ENCODE measurements at regions of chr17 and their contacts with region 1.

Region 1: GRCh38 chr17:75393523-75394331 is 11.8 kb downstream of the GRB2 start:
- DNase-seq: peak; percentile 97
- H3K4me3 ChIP-seq: peak overlapping the region; percentile 69
- H3K27ac ChIP-seq: peak overlapping the region; percentile 56
- H3K4me1 ChIP-seq: peaks cover 70% of the 10 kb centered on the region
- CTCF ChIP-seq: 0 out of 2 replicates have a peak, but pooled peaks have one; percentile 11

Region 2: DNA sequence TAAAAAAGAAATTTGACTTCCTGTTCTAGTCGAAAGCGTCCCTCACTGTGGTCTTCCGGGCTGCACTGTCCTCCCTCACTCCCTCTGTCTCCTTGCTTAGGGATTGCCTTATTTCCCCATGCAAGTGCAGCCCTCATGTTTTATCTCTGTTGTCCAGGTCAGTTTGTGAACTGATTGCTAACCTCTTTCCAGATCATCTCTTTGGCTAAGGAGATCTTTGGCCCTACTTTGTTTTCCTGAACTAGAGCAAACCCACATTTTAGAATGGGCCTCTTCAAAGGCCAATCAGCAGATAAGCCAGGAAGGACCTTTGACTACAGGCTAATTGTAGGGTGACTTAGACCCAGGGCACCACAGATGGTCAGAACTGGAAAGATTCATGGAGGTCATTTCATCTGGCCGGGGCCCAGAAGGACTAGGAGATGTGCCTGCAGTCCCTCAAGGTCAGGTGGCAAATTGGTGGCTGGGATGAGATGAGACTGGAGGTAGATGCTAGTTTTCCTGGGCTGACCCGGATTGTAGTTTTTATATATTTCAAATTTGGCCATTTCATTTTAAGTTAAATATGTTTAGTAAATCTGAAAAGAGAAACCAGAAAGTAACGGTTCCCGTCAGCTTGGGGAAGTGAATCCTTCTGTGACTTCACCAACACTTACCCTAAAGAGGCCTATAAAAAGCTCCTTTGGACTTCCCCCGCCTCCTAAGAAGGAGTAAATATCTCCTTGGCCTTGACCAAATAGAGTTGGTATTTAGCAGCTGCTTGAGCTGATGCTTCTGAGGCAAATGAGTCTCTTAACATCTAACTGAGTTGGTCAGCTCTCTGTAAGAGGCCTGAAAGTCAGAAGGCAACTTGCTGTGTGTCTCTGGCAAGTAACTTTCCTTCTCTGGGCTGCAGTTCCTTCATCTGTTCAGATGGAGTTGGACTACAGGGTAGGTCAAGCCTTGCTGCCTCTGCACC is 98.2 kb before region 1 on chr17:
- CTCF ChIA-PET with region 1: interaction called, 3 read pairs
- POLR2A ChIA-PET with region 1: interaction called, 10 read pairs
- intact Hi-C with region 1: no loop called
- DNase-seq: peak; percentile 94
- H3K4me3 ChIP-seq: peak overlapping the region; percentile 62
- H3K27ac ChIP-seq: peak overlapping the region; percentile 95
- H3K4me1 ChIP-seq: peaks cover 90% of the 10 kb centered on the region
- CTCF ChIP-seq: no peak

Region 3: GRCh38 chr17:75338335-75338734 is 55.4 kb before region 1 on chr17:
- CTCF ChIA-PET with region 1: interaction called, 5 read pairs
- POLR2A ChIA-PET with region 1: interaction called, 43 read pairs
- intact Hi-C with region 1: no loop called
- DNase-seq: no peak
- H3K4me3 ChIP-seq: peak overlapping the region; percentile 36
- H3K27ac ChIP-seq: peak overlapping the region; percentile 94
- H3K4me1 ChIP-seq: peaks cover 89% of the 10 kb centered on the region
- CTCF ChIP-seq: no peak

Region 4: DNA sequence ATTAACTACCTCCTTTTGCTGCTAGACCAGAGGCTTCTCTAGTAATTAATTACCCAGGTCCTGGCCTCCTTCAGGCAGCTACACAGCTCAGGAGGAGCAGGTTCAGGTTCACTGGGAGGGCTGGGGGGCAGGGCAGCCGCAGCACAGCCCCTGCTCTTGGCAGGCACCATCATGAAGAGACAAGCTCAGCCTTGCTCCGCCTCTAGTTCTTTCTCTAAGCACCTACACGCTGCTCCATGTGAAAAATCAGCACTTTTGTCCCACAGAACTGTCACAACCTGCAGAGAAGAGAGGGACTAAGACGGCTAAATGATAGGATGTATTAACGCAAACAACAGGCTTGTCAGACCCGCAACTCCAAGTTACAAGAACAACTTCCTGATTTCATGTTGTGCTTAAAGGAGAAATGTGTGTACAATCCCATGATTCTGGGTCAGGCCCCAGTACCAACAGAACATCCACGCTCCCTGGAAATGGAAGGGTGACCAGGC is 41.6 kb before region 1 on chr17:
- CTCF ChIA-PET with region 1: interaction called, 5 read pairs
- POLR2A ChIA-PET with region 1: interaction called, 23 read pairs
- intact Hi-C with region 1: no loop called
- DNase-seq: peak; percentile 68
- H3K4me3 ChIP-seq: peak overlapping the region; percentile 43
- H3K27ac ChIP-seq: peak overlapping the region; percentile 94
- H3K4me1 ChIP-seq: peaks cover 63% of the 10 kb centered on the region
- CTCF ChIP-seq: no peak

Region 5: GRCh38 chr17:75364078-75364477 is 29.6 kb before region 1 on chr17:
- CTCF ChIA-PET with region 1: no interaction called
- POLR2A ChIA-PET with region 1: interaction called, 16 read pairs
- intact Hi-C with region 1: no loop called
- DNase-seq: no peak
- H3K4me3 ChIP-seq: peak overlapping the region; percentile 44
- H3K27ac ChIP-seq: peak overlapping the region; percentile 64
- H3K4me1 ChIP-seq: peaks cover 97% of the 10 kb centered on the region
- CTCF ChIP-seq: no peak

Region 6: DNA sequence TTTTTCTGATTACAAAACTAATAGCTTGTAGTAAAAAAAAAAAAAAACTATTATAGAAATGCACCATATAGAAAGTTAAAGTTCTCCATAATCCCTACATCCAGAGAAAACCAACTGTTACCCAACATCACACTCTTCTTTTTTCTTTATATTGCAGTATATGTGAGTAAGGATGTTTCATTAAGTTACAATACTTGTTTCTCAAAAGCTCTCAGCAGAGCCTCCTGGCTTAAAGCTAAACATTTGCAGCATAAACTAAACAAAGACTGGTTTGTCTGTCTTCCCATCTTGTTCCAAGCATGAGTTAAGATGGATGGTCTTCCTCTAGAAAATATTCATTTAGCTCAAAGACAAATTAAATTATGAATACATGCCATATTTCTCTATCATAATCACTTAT is 13.4 kb before region 1 on chr17:
- CTCF ChIA-PET with region 1: interaction called, 3 read pairs
- POLR2A ChIA-PET with region 1: interaction called, 55 read pairs
- intact Hi-C with region 1: no loop called
- DNase-seq: no peak
- H3K4me3 ChIP-seq: no peak overlapping the region
- H3K27ac ChIP-seq: no peak overlapping the region
- H3K4me1 ChIP-seq: peaks cover 69% of the 10 kb centered on the region
- CTCF ChIP-seq: no peak

Region 7: GRCh38 chr17:75405365-75406221 is 11.9 kb after region 1 on chr17 and contains the start of gene GRB2:
- CTCF ChIA-PET with region 1: interaction called, 3 read pairs
- POLR2A ChIA-PET with region 1: interaction called, 13 read pairs
- intact Hi-C with region 1: no loop called
- DNase-seq: peak; percentile 100
- H3K4me3 ChIP-seq: peak within 1 kb of the TSS; percentile 84
- H3K27ac ChIP-seq: peak within 1 kb of the TSS; percentile 81
- H3K4me1 ChIP-seq: peaks cover 62% of the 10 kb centered on the region
- CTCF ChIP-seq: no peak
- total RNA-seq, gene GRB2: 240 and 244 TPM in 2 replicates

Region 8: DNA sequence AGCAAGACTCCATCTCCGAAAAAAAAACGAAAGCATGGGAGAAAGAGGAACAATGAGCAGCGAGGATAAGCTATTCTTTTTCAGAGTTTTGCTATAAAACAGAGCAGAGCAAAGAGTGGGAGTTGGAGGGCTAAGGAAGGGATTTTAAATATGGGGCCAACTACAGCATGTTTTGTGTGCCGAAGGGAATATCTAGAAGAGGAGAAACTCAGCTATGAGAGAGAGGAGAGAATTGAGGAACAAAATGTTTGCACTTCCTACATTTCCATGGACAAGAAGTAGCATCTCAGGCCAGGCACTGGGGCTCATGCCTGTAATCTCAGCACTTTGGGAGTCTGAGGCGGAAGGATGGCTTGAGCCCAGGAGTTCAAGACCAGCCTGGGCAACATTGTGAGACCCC is 24.8 kb after region 1 on chr17:
- CTCF ChIA-PET with region 1: no interaction called
- POLR2A ChIA-PET with region 1: no interaction called
- intact Hi-C with region 1: no loop called
- DNase-seq: no peak
- H3K4me3 ChIP-seq: no peak overlapping the region
- H3K27ac ChIP-seq: no peak overlapping the region
- H3K4me1 ChIP-seq: peaks cover 3% of the 10 kb centered on the region
- CTCF ChIP-seq: no peak